Activated T-helper 1 cell treated with anti-CD3 and anti-CD28 coated beads, Interleukin-12 subunit alpha, Interleukin-12 subunit beta, Interleukin-2, Interleukin-4 antibody, amounts not matched to agents 30 ng/mL and 10 ng/mL and 1 ng/mL, durations not matched to agents 14 hours and 24 hours and 36 hours (primary cell): ENCODE measurements at regions of chr10 and their contacts with region 1.

Region 1: DNA sequence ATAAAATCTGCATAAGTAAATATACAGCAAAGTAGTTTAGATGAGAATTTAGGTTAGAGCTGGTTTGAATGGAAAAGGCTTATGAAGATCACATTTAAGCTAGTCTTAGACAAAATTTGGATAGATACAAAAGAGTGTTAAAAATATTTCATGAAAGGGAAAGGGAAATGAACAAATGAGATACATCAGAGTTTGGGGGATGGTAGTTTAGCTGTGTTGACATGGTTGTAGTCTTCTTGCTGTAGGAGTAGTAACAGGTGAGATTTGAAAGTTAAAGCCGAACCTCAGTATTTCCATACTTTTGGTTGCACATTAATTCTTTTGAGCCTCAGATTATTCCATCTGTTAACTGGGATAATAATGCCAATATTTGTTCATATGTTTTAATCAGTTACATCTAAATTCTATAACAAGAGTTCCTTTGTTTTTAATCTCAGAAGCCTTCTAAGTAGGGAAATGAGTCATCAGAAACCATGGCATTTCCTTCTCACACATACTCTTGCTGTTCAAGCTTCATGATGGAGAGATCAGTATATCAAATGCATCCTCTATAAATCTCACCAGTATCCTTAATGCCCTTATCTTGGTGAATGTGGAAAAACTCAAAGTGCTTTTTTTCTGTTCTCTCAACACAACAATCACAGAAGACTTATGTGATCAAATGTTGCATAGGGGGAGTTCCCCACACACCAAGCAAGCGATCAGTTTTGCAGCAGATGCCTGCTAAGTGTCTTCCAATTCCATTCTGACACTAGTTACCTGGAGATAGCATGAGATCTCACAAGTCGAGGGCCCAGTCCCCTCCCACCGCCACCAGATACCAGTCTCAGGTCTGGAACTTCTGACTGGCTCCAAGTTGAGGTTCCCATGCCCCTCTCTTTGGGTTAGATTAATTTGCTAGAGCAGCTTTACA is 84.7 kb downstream of the MAPK8 start:
- DNase-seq: no peak
- H3K4me3 Mint-ChIP-seq: peak overlapping the region; percentile 6
- H3K27ac Mint-ChIP-seq: no peak overlapping the region
- H3K4me1 Mint-ChIP-seq: peaks cover 41% of the 10 kb centered on the region
- H3K27me3 Mint-ChIP-seq: peaks cover 4% of the 10 kb centered on the region

Region 2: DNA sequence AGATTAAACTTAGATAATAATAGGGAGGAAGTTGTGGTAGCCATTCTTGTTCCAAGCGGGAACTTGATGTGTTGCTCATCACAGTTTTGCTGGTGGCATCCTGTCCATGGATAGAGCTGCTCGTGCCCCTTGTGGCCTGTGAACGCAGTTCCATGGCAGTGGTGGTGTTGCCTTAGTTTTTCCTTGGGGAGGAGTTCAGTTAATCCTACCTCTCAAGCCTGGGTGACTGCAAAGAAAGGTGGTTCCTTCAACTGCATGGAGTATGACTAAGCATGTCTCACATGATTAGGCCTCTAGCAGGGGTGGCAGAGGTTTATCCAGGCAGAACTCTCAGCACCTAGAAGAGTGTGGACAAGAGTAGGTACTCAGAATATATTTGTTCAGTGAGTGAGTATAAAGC is 15.0 kb after region 1 on chr10:
- intact Hi-C with region 1: loop called (anchors 2 kb)
- DNase-seq: no peak
- H3K4me3 Mint-ChIP-seq: no peak overlapping the region
- H3K27ac Mint-ChIP-seq: no peak overlapping the region
- H3K4me1 Mint-ChIP-seq: no peaks in the 10 kb centered on the region
- H3K27me3 Mint-ChIP-seq: no peaks in the 10 kb centered on the region